ENCODE measurements at regions of chr19 and their contacts with region 1.

Region 1: GRCh38 chr19:732148-733069 is 18.5 kb upstream of the MISP start:
- DNase-seq: no peak
- H3K4me3 ChIP-seq: no peak overlapping the region
- H3K27ac ChIP-seq: no peak overlapping the region
- H3K4me1 ChIP-seq: no peaks in the 10 kb centered on the region
- H3K27me3 ChIP-seq: no peaks in the 10 kb centered on the region
- CTCF ChIP-seq: no peak
- POLR2A ChIP-seq: no peak

Region 2: DNA sequence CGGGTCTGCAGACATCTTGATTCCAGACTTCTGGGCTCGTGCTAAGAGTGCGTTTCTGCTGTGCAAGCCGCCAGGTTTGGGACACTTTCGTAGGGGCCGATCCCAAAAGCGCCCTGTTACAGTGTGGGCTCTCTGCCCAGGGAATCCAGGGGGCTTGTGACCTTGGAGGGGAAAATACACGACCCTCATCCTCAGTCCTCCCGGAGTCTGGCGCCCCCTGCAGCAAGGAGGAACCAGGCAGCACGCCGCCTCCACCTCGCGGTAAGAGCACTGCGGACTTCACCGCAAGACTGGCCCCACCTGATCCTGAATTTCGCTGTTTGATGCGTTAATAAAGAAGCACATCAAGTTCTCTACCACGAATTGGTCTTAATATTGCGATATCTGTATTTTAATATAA is 104.2 kb before region 1 on chr19:
- intact Hi-C with region 1: no loop called
- DNase-seq: no peak
- H3K4me3 ChIP-seq: no peak overlapping the region
- H3K27ac ChIP-seq: no peak overlapping the region
- H3K4me1 ChIP-seq: peaks cover 0 to 5% of the 10 kb centered on the region in 2 donors
- H3K27me3 ChIP-seq: no peaks in the 10 kb centered on the region
- CTCF ChIP-seq: no peak
- POLR2A ChIP-seq: no peak

Region 3: GRCh38 chr19:651114-651740 is 81.2 kb before region 1 on chr19:
- intact Hi-C with region 1: no loop called
- DNase-seq: no peak
- H3K4me3 ChIP-seq: no peak overlapping the region
- H3K27ac ChIP-seq: no peak overlapping the region
- H3K4me1 ChIP-seq: no peaks in the 10 kb centered on the region
- H3K27me3 ChIP-seq: no peaks in the 10 kb centered on the region
- CTCF ChIP-seq: no peak
- POLR2A ChIP-seq: no peak

Region 4: DNA sequence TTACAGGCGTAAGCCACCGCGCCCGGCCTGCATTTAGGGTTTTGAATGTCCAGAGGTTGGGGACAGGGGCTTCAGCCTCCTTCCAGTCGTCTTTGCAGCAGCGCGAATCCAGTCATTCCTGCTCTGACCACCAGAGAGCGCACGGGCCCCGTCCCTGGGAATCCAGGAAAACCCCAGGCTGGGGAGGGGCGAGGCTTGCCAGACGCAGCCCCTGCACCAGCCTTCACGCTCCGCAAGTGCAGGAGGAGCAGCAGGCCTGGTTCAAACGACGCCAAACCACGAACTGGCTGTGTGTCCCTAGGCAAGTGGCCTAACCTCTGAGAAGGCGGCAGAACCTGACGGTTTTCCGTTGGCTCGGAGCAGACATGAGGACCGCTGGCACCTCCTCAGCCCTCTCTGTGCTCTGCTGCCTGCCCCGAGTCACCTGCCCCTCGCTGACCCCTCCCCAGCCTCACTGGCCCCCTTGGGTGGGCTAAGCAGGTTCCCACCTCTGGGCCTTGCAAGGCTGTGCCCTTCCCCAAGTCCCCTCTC is 67.4 kb before region 1 on chr19:
- intact Hi-C with region 1: loop called (anchors 5 kb)
- DNase-seq: peak; percentile 79 to 83
- H3K4me3 ChIP-seq: no peak overlapping the region
- H3K27ac ChIP-seq: no peak overlapping the region
- H3K4me1 ChIP-seq: peaks cover 0 to 21% of the 10 kb centered on the region in 2 donors
- H3K27me3 ChIP-seq: no peaks in the 10 kb centered on the region
- CTCF ChIP-seq: peak; percentile 96 to 98 (median 98)
- POLR2A ChIP-seq: no peak

Region 5: GRCh38 chr19:682678-683320 is 49.6 kb before region 1 on chr19:
- intact Hi-C with region 1: no loop called
- DNase-seq: no peak
- H3K4me3 ChIP-seq: no peak overlapping the region
- H3K27ac ChIP-seq: no peak overlapping the region
- H3K4me1 ChIP-seq: no peaks in the 10 kb centered on the region
- H3K27me3 ChIP-seq: no peaks in the 10 kb centered on the region
- CTCF ChIP-seq: no peak
- POLR2A ChIP-seq: no peak

Region 6: DNA sequence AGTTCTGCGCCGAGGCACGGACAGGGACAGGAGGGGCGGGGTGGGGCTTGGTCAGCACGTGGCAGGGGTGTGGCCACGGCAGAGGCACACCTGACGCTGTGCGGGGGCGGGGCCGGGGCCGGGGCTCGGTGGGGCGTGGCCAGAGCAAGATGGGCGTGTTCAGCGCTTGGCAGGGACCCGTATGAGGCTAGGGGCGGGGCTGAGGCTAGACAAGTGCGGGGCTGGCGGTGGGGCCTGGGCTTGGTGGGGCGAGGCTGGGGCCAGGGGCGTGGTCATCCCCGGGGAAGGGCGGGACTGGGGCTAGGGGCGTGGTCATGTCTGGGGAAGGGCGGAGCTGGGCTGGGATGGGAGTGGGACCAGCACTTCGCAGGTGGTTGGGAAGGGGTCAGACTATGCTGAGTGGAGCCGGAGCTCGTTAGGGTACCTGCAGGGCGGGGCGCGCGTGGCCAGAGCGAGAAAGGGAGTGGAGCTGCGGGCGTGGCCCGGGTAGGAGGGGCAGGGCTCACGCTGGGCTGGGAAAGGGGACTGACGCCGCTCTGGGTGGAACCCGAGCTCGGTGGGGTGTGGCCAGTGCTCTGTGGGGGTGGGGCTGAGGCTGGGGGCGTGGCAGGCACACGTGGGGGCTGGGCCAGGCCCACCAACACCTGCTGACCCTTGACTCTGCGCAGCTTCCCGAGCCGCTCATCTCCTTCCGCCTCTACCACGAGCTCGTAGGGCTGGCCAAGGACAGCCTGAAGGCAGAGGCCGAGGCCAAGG is 349.9 kb after region 1 on chr19:
- intact Hi-C with region 1: no loop called
- DNase-seq: no peak
- H3K4me3 ChIP-seq: no peak overlapping the region
- H3K27ac ChIP-seq: no peak overlapping the region
- H3K4me1 ChIP-seq: peaks cover 0 to 13% of the 10 kb centered on the region in 2 donors
- H3K27me3 ChIP-seq: no peaks in the 10 kb centered on the region
- CTCF ChIP-seq: no peak
- POLR2A ChIP-seq: no peak